ENCODE measurements at regions of chr12 and their contacts with region 1.

Region 1: DNA sequence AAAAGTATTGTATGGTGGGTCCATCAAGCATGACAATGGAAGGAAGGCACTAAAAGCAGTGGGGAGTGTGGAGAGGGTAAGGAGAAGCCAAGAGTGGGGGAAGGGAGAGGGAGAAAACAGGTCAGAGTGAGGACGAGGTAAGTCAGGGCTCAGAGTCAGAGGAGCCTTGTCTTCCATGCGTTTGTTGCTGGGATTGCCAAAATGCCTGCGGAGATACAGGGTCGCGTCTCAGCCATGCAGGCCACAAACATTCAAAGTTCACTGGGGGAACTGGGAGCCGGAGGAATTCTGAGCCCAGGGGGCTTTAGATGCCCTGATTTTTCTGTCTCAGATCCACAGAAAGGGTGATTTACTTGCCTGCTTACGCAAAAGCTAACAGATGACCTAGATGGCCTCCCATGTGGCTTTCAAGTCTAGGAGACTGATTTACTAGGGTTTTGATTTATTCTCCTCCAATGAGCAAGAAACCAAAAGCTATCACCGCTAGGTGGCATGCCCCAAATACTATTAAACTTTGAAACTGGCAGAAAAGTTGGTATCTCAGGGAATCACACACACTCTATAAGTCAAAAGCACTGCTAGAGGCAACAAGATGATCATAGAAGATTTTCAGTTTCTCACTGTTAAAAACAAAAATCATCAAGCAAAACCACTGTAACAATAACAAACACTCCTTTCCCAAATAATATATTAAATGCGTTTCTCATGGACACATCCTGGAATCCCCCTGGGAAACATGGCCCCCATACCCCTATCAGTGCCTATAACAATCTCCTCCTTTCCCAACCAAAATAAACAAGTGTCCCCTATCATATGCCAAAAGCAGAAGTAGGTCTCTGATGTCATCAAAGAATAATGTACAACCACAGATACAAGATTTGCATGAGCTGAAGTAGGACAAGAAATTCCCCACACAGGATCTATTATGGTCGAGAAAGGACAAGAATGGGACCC is 26.6 kb upstream of the MDM1 start:
- DNase-seq: peak; percentile 86
- ATAC-seq: peak; percentile 82
- H3K4me3 ChIP-seq: peak overlapping the region in 1 of 5 experiments; percentile 5
- H3K4me3 Mint-ChIP-seq: peak overlapping the region; percentile 54
- H3K27ac ChIP-seq: peak overlapping the region; percentile 78 to 84
- H3K27ac Mint-ChIP-seq: peak overlapping the region; percentile 86
- H3K4me1 ChIP-seq: peaks cover 21 to 22% of the 10 kb centered on the region in 2 donors
- H3K4me1 Mint-ChIP-seq: peaks cover 23% of the 10 kb centered on the region
- H3K27me3 ChIP-seq: no peaks in the 10 kb centered on the region
- H3K27me3 Mint-ChIP-seq: no peaks in the 10 kb centered on the region
- CTCF ChIP-seq: peak; percentile 73

Region 2: GRCh38 chr12:68317047-68317667 is 41.7 kb before region 1 on chr12:
- CTCF ChIA-PET with region 1: no interaction called
- POLR2A ChIA-PET with region 1: no interaction called
- intact Hi-C with region 1: no loop called
- DNase-seq: peak; percentile 65
- ATAC-seq: no peak
- H3K4me3 ChIP-seq: no peak overlapping the region
- H3K4me3 Mint-ChIP-seq: no peak overlapping the region
- H3K27ac ChIP-seq: no peak overlapping the region
- H3K27ac Mint-ChIP-seq: no peak overlapping the region
- H3K4me1 ChIP-seq: no peaks in the 10 kb centered on the region
- H3K4me1 Mint-ChIP-seq: no peaks in the 10 kb centered on the region
- H3K27me3 ChIP-seq: no peaks in the 10 kb centered on the region
- H3K27me3 Mint-ChIP-seq: no peaks in the 10 kb centered on the region
- CTCF ChIP-seq: peak; percentile 89

Region 3: DNA sequence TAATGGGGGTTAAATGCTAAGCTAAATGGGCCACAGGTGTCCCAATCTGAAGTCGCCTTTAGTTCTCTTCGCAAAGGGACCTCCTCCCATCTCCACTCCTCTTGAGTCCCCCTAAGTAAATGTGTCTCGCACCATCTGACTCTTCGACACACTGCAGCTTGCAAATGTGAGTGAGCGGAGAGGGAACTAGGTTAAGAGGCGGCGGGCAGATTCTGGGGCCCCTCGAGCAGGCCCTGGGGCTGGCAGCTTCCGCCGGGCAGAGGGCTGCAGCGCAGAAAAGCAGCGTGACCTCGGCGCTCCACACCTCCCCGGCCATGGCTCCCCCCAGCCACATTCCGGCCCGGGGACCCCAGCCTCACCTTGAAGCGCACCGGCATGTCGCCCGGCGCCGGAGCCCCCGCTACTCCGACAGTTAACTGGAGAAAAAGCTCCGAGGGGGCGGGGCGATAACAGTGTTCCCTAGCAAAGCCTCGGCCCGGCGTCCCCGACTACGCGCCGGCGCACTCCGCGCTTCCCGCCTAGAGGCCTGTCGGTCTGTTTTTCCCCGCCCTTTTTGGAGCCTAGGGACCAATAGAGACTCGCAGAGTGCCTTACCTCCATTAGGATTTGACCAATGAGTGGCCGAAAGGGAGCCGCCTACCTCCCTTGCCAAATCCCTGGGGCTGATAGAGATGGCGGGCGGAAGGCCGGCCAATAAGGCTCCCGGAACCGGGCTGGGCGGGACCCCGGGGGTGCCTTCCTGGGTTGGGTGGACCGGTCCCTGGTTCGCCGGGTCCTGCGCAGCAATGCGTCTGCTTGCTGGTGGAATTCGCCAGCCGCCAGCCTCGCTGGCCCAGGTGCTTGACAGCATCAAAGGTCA is 26.7 kb before region 1 on chr12 and contains the start of gene MDM1:
- CTCF ChIA-PET with region 1: interaction called, 5 read pairs
- POLR2A ChIA-PET with region 1: no interaction called
- intact Hi-C with region 1: loop called (anchors 1 kb)
- DNase-seq: peak; percentile 97
- ATAC-seq: peak; percentile 97
- H3K4me3 ChIP-seq: peak within 1 kb of the TSS; percentile 79 to 85 (median 82)
- H3K4me3 Mint-ChIP-seq: peak within 1 kb of the TSS; percentile 94
- H3K27ac ChIP-seq: peak within 1 kb of the TSS; percentile 55 to 78
- H3K27ac Mint-ChIP-seq: peak within 1 kb of the TSS; percentile 90
- H3K4me1 ChIP-seq: peaks cover 12 to 14% of the 10 kb centered on the region in 2 donors
- H3K4me1 Mint-ChIP-seq: peaks cover 40% of the 10 kb centered on the region
- H3K27me3 ChIP-seq: no peaks in the 10 kb centered on the region
- H3K27me3 Mint-ChIP-seq: no peaks in the 10 kb centered on the region
- CTCF ChIP-seq: no peak
- total RNA-seq, gene MDM1: 38.3 and 38.9 TPM in 2 replicates

Region 4: DNA sequence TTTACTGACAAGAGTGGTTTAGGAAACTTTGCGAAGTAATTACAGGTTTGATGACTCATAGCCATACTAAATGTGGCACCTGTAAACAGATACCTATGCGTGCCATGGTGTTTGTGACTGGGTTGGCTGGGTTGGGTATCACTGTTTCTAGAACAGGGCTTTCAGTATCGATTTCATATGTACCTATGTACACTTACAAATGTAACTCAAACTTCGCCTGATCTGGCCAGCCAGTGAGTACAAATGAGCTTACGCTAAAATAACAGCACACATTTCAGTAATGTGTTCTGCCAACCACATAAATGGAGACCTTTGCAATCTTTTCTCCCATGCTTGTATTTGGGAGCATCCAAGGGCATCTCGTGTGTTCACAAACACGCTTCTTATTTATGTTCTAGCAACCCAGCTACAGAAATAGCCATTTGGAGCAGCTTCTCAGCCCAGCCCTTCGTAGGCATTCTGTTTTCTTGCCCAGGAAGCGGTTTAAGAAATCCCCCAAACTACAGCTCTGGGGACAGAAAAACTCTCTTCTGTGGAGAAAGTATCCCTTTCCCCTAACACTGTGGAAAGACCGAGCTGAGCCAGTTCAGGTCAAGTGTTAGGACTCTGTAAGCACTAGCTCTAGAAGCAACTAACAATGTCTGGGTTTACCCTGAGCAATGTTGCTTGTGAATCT is 15.6 kb after region 1 on chr12:
- CTCF ChIA-PET with region 1: interaction called, 3 read pairs
- POLR2A ChIA-PET with region 1: interaction called, 9 read pairs
- intact Hi-C with region 1: loop called (anchors 1 kb)
- DNase-seq: peak; percentile 55
- ATAC-seq: peak; percentile 86
- H3K4me3 ChIP-seq: no peak overlapping the region
- H3K4me3 Mint-ChIP-seq: peak overlapping the region; percentile 78
- H3K27ac ChIP-seq: peak overlapping the region; percentile 24 to 42
- H3K27ac Mint-ChIP-seq: peak overlapping the region; percentile 93
- H3K4me1 ChIP-seq: peaks cover 0 to 27% of the 10 kb centered on the region in 2 donors
- H3K4me1 Mint-ChIP-seq: peaks cover 33% of the 10 kb centered on the region
- H3K27me3 ChIP-seq: no peaks in the 10 kb centered on the region
- H3K27me3 Mint-ChIP-seq: no peaks in the 10 kb centered on the region
- CTCF ChIP-seq: no peak

Region 5: DNA sequence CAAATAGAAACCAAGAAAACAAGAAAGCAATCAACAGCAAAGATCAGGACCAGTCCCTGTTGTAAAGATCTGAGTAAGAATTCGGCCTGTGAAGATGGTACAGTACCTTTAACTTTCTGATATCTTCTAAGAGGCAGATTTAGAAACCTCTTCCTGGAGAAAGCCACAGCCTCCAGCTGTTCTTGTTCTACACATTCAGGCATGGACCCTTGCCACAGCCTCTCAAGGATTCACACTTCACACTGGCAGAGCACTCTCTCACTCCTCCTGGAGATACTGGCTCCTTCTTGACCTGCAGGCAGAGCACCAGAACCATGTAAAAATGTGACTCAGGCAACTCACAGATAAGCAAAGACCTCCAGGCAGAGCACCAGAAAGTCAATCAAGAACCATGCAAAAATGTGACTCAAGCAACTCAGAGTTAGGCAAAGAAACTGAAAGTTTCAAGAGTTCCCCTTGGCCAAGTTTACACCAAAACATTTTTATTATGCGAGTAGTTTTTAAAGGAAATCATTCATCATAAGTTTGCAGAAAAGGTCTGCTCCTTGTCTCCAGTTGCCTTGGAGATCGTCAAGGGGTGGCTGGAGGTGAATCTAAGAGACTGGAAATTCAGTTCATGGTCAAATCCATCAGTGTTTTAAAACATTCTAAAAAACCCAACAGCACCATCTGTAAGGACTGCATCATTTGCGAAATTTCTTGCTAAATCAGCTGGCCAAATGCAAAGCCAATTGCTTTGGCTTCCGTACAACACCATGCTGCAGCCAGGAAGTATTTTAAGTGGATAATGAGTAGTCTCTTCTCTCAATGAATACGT is 92.7 kb after region 1 on chr12:
- CTCF ChIA-PET with region 1: no interaction called
- POLR2A ChIA-PET with region 1: no interaction called
- intact Hi-C with region 1: loop called (anchors 2 kb)
- DNase-seq: peak; percentile 46
- ATAC-seq: peak; percentile 64
- H3K4me3 ChIP-seq: peak overlapping the region; percentile 9 to 53 (median 41)
- H3K4me3 Mint-ChIP-seq: peak overlapping the region; percentile 83
- H3K27ac ChIP-seq: peak overlapping the region; percentile 72 to 73
- H3K27ac Mint-ChIP-seq: peak overlapping the region; percentile 90
- H3K4me1 ChIP-seq: peaks cover 78 to 88% of the 10 kb centered on the region in 2 donors
- H3K4me1 Mint-ChIP-seq: peaks cover 91% of the 10 kb centered on the region
- H3K27me3 ChIP-seq: no peaks in the 10 kb centered on the region
- H3K27me3 Mint-ChIP-seq: no peaks in the 10 kb centered on the region
- CTCF ChIP-seq: no peak

Region 6: DNA sequence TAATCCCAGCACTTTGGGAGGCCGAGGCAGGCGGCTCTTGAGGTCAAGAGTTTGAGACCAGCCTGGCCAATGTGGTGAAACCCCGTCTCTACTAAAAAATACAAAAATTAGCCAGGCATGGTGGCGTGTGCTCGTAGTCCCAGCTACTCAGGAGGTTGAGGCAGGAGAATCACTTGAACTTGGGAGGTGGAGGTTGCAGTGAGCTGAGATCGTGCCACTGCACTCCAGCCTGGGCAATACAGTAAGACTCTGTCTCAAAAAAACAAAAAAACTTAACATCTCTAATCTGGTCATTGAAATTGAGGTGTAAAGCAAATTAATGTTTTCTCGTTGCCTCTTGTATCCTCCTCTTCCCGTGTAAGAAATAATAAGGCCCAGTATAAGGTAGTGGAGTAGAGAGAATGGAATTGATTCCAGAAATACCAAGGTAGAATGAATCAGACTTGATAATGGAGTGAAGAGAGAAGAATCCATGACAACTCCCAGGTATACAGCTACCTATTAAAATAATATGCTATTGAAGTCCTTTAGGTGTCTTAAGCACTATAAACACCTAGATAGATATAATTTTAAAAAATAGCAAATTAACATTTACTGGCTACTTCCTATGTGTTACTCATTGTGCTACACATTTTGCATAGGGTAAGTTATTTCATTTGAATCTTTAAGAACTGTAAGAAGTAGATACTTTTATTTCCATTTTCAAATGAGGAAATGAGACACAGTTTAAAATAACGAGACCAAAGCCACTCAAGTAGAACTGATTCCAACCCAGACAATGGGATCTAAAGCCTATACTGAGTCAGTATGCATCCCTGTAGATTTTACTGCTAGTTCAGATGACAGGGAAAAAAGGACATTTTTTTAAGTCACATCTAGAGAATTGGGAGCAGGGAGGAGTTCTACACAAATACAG is 275.1 kb after region 1 on chr12:
- CTCF ChIA-PET with region 1: interaction called, 3 read pairs
- POLR2A ChIA-PET with region 1: no interaction called
- intact Hi-C with region 1: loop called (anchors 1 kb)
- DNase-seq: peak; percentile 55
- ATAC-seq: peak; percentile 59
- H3K4me3 ChIP-seq: peak overlapping the region in 1 of 5 experiments; percentile 28
- H3K4me3 Mint-ChIP-seq: peak overlapping the region; percentile 62
- H3K27ac ChIP-seq: peak overlapping the region; percentile 37 to 59
- H3K27ac Mint-ChIP-seq: peak overlapping the region; percentile 62
- H3K4me1 ChIP-seq: peaks cover 63 to 77% of the 10 kb centered on the region in 2 donors
- H3K4me1 Mint-ChIP-seq: peaks cover 84% of the 10 kb centered on the region
- H3K27me3 ChIP-seq: no peaks in the 10 kb centered on the region
- H3K27me3 Mint-ChIP-seq: no peaks in the 10 kb centered on the region
- CTCF ChIP-seq: no peak

Region 7: GRCh38 chr12:68686595-68687521 is 328.0 kb after region 1 on chr12 and contains the start of gene NUP107:
- CTCF ChIA-PET with region 1: interaction called, 3 read pairs
- POLR2A ChIA-PET with region 1: interaction called, 14 read pairs
- intact Hi-C with region 1: loop called (anchors 1 kb)
- DNase-seq: peak; percentile 98
- ATAC-seq: peak; percentile 95
- H3K4me3 ChIP-seq: peak within 1 kb of the TSS; percentile 71 to 100 (median 81)
- H3K4me3 Mint-ChIP-seq: peak within 1 kb of the TSS; percentile 96
- H3K27ac ChIP-seq: peak within 1 kb of the TSS; percentile 70 to 77
- H3K27ac Mint-ChIP-seq: peak within 1 kb of the TSS; percentile 98
- H3K4me1 ChIP-seq: peaks cover 17 to 20% of the 10 kb centered on the region in 2 donors
- H3K4me1 Mint-ChIP-seq: peaks cover 28% of the 10 kb centered on the region
- H3K27me3 ChIP-seq: no peaks in the 10 kb centered on the region
- H3K27me3 Mint-ChIP-seq: no peaks in the 10 kb centered on the region
- CTCF ChIP-seq: no peak
- total RNA-seq, gene NUP107: 77.3 and 88.9 TPM in 2 replicates

Region 8: GRCh38 chr12:68745904-68746571 is 387.2 kb after region 1 on chr12 and contains the start of gene SLC35E3:
- CTCF ChIA-PET with region 1: no interaction called
- POLR2A ChIA-PET with region 1: no interaction called
- intact Hi-C with region 1: loop called (anchors 1 kb)
- DNase-seq: peak; percentile 93
- ATAC-seq: peak; percentile 97
- H3K4me3 ChIP-seq: peak within 1 kb of the TSS; percentile 75 to 96 (median 89)
- H3K4me3 Mint-ChIP-seq: peak within 1 kb of the TSS; percentile 97
- H3K27ac ChIP-seq: peak within 1 kb of the TSS; percentile 71 to 89
- H3K27ac Mint-ChIP-seq: peak within 1 kb of the TSS; percentile 95
- H3K4me1 ChIP-seq: peaks cover 21 to 26% of the 10 kb centered on the region in 2 donors
- H3K4me1 Mint-ChIP-seq: peaks cover 53% of the 10 kb centered on the region
- H3K27me3 ChIP-seq: no peaks in the 10 kb centered on the region
- H3K27me3 Mint-ChIP-seq: no peaks in the 10 kb centered on the region
- CTCF ChIP-seq: no peak
- total RNA-seq, gene SLC35E3: 15.1 TPM in 2 replicates